ENCODE measurements at regions of chr5 and their contacts with region 1.

Region 1: GRCh38 chr5:54243473-54244080 is 66.8 kb downstream of the ARL15 start:
- DNase-seq: no peak
- H3K4me3 ChIP-seq: no peak overlapping the region
- H3K27ac ChIP-seq: no peak overlapping the region
- H3K4me1 ChIP-seq: no peaks in the 10 kb centered on the region
- H3K27me3 ChIP-seq: no peaks in the 10 kb centered on the region
- CTCF ChIP-seq: peak in 2 of 3 donors; percentile 27 to 35
- EP300 ChIP-seq: no peak
- POLR2A ChIP-seq: no peak

Region 2: DNA sequence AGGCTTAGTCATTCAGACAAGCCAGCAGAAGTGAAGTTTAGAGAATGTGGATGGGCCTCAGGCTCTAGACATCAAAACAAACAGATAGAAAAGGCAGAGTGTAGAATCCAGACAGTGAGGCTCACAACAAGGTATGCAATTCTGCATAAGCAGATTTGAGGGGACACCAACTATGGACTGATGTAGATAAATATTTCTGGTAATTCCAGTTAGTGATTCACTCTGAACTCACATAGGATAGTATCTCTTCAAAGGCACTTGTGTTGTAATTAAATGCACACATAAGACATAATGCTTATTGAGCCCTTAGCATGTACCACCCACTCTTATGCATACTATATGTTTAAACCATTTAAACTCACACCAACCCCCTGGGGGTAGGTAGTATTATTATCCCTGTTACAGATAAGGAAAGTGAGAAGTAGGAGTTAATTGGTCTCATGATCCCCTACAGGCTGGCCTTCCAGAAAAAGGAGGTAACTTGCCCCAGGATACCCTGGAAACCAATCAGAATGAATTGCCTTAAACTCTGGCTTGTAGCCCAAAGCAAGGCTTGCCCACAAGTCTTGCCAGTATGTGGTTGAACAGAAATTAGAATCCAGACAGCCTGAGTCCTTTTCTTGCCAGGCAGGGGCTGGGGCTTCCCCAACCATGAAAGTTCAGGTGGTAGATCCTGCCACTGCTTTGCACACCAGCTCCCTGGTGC is 172.5 kb after region 1 on chr5:
- intact Hi-C with region 1: loop called in 3 of 4 experiments (anchors 10 kb)
- DNase-seq: no peak
- H3K4me3 ChIP-seq: no peak overlapping the region
- H3K27ac ChIP-seq: no peak overlapping the region
- H3K4me1 ChIP-seq: no peaks in the 10 kb centered on the region
- H3K27me3 ChIP-seq: no peaks in the 10 kb centered on the region
- CTCF ChIP-seq: no peak
- EP300 ChIP-seq: no peak
- POLR2A ChIP-seq: no peak

Region 3: GRCh38 chr5:54480296-54480695 is 236.7 kb after region 1 on chr5:
- intact Hi-C with region 1: loop called in 1 of 4 experiments (anchors 5 kb)
- DNase-seq: no peak
- H3K4me3 ChIP-seq: no peak overlapping the region
- H3K27ac ChIP-seq: no peak overlapping the region
- H3K4me1 ChIP-seq: no peaks in the 10 kb centered on the region
- H3K27me3 ChIP-seq: no peaks in the 10 kb centered on the region
- CTCF ChIP-seq: no peak
- EP300 ChIP-seq: no peak
- POLR2A ChIP-seq: no peak

Region 4: DNA sequence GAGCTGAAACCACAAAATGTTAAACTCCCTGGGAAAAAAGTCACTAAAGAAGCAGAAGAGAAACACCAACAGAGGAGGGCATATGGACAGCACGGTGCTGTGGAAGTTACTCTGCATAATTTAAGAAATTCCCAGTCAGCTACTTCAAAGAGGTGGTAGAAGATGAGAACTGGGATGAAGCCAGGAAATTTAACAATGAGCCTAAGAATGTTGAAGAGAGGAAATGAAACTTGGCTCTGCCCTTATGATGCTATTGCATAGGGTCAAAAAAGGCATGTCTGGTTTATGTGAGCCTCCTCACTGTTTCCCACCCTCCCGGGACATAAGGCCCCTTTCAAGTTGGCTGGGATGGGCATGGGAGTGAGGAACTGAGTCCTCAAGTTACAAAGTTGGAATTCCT is 248.6 kb after region 1 on chr5:
- intact Hi-C with region 1: loop called in 3 of 4 experiments (anchors 5 to 10 kb)
- DNase-seq: no peak
- H3K4me3 ChIP-seq: no peak overlapping the region
- H3K27ac ChIP-seq: no peak overlapping the region
- H3K4me1 ChIP-seq: no peaks in the 10 kb centered on the region
- H3K27me3 ChIP-seq: no peaks in the 10 kb centered on the region
- CTCF ChIP-seq: no peak
- EP300 ChIP-seq: no peak
- POLR2A ChIP-seq: no peak

Measured in ovary (tissue), 10 donors.